Activated T-helper 1 cell treated with anti-CD3 and anti-CD28 coated beads, Interleukin-12 subunit alpha, Interleukin-12 subunit beta, Interleukin-2, Interleukin-4 antibody, amounts not matched to agents 30 ng/mL and 10 ng/mL and 1 ng/mL, durations not matched to agents 14 hours and 24 hours and 36 hours (primary cell): ENCODE measurements at regions of chr3 and their contacts with region 1.

Region 1: DNA sequence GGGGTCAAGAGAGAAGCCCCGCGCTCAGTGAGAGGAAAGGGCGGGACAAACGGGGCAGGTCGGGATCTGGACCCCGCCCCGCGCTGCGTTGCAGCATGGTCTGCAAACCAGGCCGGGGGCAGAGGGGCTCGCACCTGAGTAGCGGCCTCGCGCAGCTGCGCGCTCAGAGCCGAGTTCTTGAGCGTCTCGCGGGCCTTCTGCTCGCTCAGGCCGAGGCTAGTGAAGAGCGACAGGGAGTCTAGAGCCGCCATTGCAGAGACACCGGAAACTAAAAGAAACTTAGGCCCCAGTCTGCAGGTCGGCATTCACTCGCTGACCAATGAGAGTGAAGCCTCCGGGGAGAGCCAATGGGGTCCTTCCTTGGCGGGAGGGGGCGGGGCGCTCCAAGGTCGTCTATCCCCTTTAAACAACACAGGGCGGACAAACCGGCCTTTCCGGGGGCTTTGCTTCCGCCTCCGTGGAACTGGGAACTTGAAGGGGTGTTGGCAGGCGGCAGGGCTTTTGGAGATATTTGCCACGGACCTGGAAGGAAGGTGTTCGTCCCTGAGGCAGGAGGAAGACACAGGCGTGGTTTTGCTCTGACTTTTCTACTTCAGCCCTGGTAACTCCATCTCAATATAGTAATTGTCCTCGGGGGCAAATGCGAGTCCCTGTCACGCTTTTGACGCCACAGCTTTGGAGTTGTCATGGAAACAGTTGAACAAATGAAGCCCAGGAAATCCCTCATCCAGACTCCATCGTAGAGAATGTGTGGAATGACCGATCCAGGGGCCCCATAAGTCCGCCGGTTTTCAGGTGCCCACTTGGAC is at the start of gene QARS1:
- DNase-seq: peak; percentile 87
- H3K4me3 Mint-ChIP-seq: peak within 1 kb of the TSS; percentile 98
- H3K27ac Mint-ChIP-seq: peak within 1 kb of the TSS; percentile 94
- H3K4me1 Mint-ChIP-seq: peaks cover 27% of the 10 kb centered on the region
- H3K27me3 Mint-ChIP-seq: no peaks in the 10 kb centered on the region
- total RNA-seq, gene QARS1: 185 and 200 TPM in 2 replicates

Region 2: GRCh38 chr3:49007068-49007770 is 97.5 kb before region 1 on chr3 and contains the start of gene WDR6:
- intact Hi-C with region 1: no loop called
- DNase-seq: peak; percentile 96
- H3K4me3 Mint-ChIP-seq: peak within 1 kb of the TSS; percentile 98
- H3K27ac Mint-ChIP-seq: peak within 1 kb of the TSS; percentile 100
- H3K4me1 Mint-ChIP-seq: peaks cover 29% of the 10 kb centered on the region
- H3K27me3 Mint-ChIP-seq: no peaks in the 10 kb centered on the region
- total RNA-seq, gene WDR6: 143 and 145 TPM in 2 replicates

Region 3: DNA sequence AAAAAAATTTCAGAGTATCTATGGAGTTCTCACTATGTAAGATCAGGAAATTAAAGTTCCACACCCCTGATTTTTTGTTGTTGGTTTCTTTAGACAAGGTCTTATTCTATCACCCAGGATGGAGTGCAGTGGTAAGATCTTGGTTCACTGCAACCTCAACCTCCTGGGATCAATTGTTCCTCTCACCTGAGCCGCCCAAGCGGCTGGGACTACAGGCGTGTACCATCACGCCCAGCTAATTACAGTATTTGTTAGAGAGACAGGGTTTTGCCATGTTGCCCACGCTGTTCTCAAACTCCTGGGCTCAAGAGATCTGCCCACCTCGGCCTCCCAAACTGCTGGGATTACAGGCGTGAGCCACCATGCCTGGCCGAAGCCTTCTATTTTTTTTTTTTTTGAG is 23.3 kb before region 1 on chr3:
- intact Hi-C with region 1: no loop called
- DNase-seq: no peak
- H3K4me3 Mint-ChIP-seq: no peak overlapping the region
- H3K27ac Mint-ChIP-seq: no peak overlapping the region
- H3K4me1 Mint-ChIP-seq: no peaks in the 10 kb centered on the region
- H3K27me3 Mint-ChIP-seq: no peaks in the 10 kb centered on the region

Region 4: GRCh38 chr3:49158108-49158709 is 53.5 kb after region 1 on chr3:
- intact Hi-C with region 1: loop called (anchors 5 kb)
- DNase-seq: peak; percentile 47
- H3K4me3 Mint-ChIP-seq: no peak overlapping the region
- H3K27ac Mint-ChIP-seq: no peak overlapping the region
- H3K4me1 Mint-ChIP-seq: no peaks in the 10 kb centered on the region
- H3K27me3 Mint-ChIP-seq: no peaks in the 10 kb centered on the region

Region 5: GRCh38 chr3:49171119-49171774 is 66.6 kb after region 1 on chr3 and contains the start of gene KLHDC8B:
- intact Hi-C with region 1: loop called (anchors 2 kb)
- DNase-seq: peak; percentile 68
- H3K4me3 Mint-ChIP-seq: peak within 1 kb of the TSS; percentile 88
- H3K27ac Mint-ChIP-seq: peak within 1 kb of the TSS; percentile 63
- H3K4me1 Mint-ChIP-seq: peaks cover 6% of the 10 kb centered on the region
- H3K27me3 Mint-ChIP-seq: no peaks in the 10 kb centered on the region
- total RNA-seq, gene KLHDC8B: 2.6 and 2.9 TPM in 2 replicates

Region 6: DNA sequence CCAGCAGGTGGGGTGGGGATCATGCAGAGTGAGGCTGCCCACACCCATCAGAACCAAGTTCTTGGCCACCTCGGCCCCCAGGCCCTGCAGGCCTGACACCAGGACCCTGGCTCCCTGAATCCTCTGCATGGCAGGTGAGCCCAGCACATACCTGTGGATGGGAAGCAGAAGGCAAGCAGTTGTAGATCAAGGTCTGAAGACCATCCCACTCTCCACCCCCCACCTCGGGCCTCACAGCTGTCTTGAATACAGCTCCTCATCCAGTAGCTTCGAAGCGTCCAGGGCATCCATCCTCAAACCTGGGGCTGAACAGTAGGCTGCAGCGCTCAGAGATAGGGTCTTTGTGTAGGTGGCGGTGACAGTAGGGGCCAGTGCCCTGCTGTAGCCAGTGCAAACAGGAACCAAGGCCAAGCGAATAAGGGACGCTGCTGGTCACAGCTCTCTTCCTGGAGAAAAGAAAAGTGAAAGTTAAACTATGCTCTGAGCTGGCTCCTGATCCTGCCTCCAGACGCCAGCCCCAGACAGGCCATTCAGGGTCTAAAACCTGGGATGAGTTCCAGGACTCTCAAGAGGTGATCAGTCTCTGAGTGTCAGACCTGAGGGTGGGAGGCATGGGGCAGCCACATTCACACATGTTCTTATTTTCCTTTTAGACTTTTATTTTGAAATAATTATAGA is 708.9 kb after region 1 on chr3 and contains the start of gene UBA7:
- intact Hi-C with region 1: no loop called
- DNase-seq: peak; percentile 40
- H3K4me3 Mint-ChIP-seq: peak within 1 kb of the TSS; percentile 94
- H3K27ac Mint-ChIP-seq: peak within 1 kb of the TSS; percentile 94
- H3K4me1 Mint-ChIP-seq: peaks cover 27% of the 10 kb centered on the region
- H3K27me3 Mint-ChIP-seq: no peaks in the 10 kb centered on the region
- total RNA-seq, gene UBA7: 90.3 and 97.5 TPM in 2 replicates